Mammary epithelial cell (primary cell): ENCODE measurements at regions of chr19 and their contacts with region 1.

Region 1: DNA sequence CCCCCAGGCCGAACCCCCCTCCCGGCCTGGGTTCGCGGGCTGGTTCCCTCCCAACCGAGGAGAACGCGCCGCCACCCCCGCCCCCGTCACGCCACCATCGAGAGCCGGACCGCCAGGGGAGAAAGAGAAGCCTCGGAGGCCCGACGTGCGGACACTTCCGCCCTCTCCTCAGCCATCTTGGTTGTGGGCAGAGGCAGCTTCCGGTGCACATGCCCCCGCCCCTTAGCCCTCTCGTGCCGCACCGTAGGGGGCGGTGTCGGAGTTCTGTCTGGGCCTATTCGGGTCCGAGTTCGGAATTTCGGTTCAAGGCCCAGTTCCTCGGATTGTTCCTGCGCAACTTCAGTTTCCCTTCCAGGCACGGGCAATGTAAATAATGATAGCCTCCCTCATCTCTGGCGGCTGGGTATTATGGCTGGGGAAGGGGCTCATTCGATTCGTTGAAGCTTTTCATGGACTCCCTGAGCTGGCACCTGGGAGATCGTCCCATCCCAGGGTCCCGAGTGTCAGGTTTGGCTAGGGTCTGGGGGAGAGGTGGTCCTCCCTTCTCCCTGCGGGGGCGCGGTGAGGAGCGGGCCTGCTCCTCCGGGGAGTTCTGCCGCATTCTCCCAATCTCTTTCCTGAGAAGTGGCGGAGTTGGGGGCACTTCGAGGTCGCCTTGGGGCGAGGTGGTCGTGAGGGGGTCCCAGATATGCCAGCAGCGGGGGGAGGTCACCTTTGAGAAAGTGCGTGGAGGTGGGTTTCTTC is at the starts of genes IER2 and STX10:
- DNase-seq: peak; percentile 93
- H3K4me3 ChIP-seq: peak within 1 kb of the TSS; percentile 61 to 93 (median 74)
- H3K27ac ChIP-seq: peak within 1 kb of the TSS; percentile 93
- H3K4me1 ChIP-seq: peaks cover 16% of the 10 kb centered on the region
- H3K27me3 ChIP-seq: no peaks in the 10 kb centered on the region
- CTCF ChIP-seq: peak; percentile 27 to 70
- total RNA-seq, gene IER2: 16.2 to 108 TPM
- total RNA-seq, gene STX10: 33.7 to 48.0 TPM

Region 2: DNA sequence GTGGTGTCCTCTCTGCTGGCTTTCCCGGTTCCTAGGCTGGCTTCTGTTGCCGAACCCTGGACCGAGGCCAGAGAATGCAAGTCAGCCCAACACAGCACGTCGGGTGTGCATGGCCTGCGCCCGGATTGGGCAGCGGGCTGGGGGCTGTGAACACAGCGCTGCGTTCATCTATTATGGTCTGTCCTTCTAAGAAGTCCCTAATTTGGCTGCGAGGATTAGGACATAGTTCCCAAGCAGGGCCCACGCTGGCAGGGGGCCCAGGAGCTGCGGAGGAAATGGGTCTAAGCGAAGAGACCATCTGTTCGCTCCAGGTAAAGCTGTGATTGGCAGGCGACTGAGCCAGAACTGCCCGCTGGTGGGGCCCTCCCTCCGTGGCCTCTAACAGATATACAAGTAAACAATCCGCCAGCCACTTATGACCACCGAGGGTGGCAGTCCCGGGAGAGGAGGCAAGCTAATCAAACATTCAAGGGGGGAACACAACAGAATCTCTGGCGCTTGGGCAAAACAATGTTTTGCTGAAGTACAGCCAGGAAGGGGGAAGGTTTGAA is 237.3 kb before region 1 on chr19:
- CTCF ChIA-PET with region 1: no interaction called
- dilution Hi-C with region 1: no loop called
- in situ Hi-C with region 1: no loop called
- intact Hi-C with region 1: no loop called
- DNase-seq: no peak
- H3K4me3 ChIP-seq: no peak overlapping the region
- H3K27ac ChIP-seq: no peak overlapping the region
- H3K4me1 ChIP-seq: peaks cover 14% of the 10 kb centered on the region
- H3K27me3 ChIP-seq: no peaks in the 10 kb centered on the region
- CTCF ChIP-seq: no peak

Region 3: GRCh38 chr19:12974301-12975220 is 175.8 kb before region 1 on chr19:
- CTCF ChIA-PET with region 1: no interaction called
- dilution Hi-C with region 1: no loop called
- in situ Hi-C with region 1: no loop called
- intact Hi-C with region 1: loop called (anchors 5 kb)
- DNase-seq: no peak
- H3K4me3 ChIP-seq: no peak overlapping the region
- H3K27ac ChIP-seq: no peak overlapping the region
- H3K4me1 ChIP-seq: no peaks in the 10 kb centered on the region
- H3K27me3 ChIP-seq: peaks cover 3% of the 10 kb centered on the region
- CTCF ChIP-seq: no peak

Region 4: GRCh38 chr19:13060964-13061927 is 89.1 kb before region 1 on chr19:
- CTCF ChIA-PET with region 1: no interaction called
- dilution Hi-C with region 1: loop called (anchors 5 kb)
- in situ Hi-C with region 1: no loop called
- intact Hi-C with region 1: no loop called
- DNase-seq: peak; percentile 67
- H3K4me3 ChIP-seq: peak overlapping the region; percentile 20 to 23 (median 23)
- H3K27ac ChIP-seq: peak overlapping the region; percentile 77
- H3K4me1 ChIP-seq: peaks cover 35% of the 10 kb centered on the region
- H3K27me3 ChIP-seq: no peaks in the 10 kb centered on the region
- CTCF ChIP-seq: peak; percentile 84 to 97

Region 5: DNA sequence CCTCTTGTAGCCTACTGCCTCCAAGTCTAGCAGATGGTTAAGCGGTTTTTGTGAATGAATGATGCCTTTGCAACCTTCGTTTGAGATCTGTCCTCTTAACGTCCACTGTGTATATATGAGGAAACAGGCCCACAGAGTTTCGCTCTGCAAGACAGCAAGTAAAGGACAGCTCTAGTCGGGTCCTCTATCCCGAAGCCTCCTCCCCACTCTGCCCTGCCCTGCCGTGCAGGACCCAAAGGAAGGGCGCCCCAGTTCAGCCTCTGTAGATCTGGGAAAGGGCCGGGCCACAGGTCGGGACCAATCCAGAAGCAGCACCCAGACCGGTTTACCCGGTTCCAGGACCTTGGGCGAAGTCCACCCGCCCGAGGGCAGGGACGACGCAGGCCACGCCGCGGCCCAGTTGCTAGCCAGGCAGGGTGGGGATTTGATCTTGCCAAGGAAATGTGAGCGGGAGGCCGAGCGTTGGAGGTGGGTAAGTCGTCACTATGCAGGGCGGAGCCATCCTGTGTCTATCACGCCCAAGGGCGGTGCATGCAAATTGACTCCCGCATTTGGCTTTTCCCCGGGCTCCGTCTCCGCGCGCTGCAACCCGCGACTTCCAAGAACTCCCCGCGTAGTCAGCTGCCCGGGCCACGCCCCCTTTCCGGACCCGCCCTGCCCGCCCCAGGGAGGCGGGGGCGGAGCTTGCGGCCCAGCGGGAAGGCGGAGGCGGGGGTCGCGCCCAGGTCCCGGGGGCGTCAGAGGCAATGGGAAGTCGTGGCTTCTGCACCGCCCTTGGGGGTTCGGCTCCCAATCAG is 12.4 kb after region 1 on chr19:
- CTCF ChIA-PET with region 1: no interaction called
- dilution Hi-C with region 1: no loop called
- in situ Hi-C with region 1: no loop called
- intact Hi-C with region 1: loop called (anchors 1 kb)
- DNase-seq: peak; percentile 97
- H3K4me3 ChIP-seq: peak overlapping the region; percentile 3 to 36 (median 33)
- H3K27ac ChIP-seq: peak overlapping the region; percentile 82
- H3K4me1 ChIP-seq: peaks cover 51% of the 10 kb centered on the region
- H3K27me3 ChIP-seq: no peaks in the 10 kb centered on the region
- CTCF ChIP-seq: no peak

Region 6: DNA sequence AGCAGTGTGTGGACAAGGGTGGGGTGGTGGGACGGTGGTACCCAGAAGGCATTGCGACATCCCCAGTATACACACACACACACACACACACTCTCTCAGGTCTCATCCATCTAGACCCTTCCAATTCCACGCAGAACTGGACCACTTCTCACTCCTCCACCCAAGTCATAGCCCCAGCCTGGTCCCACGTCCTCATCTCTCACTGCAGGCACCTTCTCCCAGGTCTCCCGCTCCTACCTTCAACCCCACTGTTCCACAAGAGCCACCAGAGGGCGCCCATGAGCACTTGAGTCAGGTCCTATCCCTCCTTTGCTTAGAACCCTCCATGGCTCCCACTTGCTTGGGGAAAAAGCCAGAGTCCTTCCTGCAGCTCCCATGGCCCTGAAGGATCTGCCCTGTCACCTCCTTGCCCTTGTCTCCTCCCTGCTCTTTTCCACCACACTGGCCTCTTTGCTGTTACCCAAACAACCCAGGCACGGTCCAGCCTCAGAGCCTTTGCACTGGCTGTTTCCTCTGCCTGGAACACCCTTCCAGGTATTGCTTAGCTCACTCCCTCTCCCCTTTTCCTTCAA is 62.5 kb after region 1 on chr19:
- CTCF ChIA-PET with region 1: no interaction called
- dilution Hi-C with region 1: no loop called
- in situ Hi-C with region 1: no loop called
- intact Hi-C with region 1: loop called (anchors 5 kb)
- DNase-seq: peak; percentile 33
- H3K4me3 ChIP-seq: no peak overlapping the region
- H3K27ac ChIP-seq: no peak overlapping the region
- H3K4me1 ChIP-seq: no peaks in the 10 kb centered on the region
- H3K27me3 ChIP-seq: no peaks in the 10 kb centered on the region
- CTCF ChIP-seq: peak; percentile 59 to 62

Region 7: DNA sequence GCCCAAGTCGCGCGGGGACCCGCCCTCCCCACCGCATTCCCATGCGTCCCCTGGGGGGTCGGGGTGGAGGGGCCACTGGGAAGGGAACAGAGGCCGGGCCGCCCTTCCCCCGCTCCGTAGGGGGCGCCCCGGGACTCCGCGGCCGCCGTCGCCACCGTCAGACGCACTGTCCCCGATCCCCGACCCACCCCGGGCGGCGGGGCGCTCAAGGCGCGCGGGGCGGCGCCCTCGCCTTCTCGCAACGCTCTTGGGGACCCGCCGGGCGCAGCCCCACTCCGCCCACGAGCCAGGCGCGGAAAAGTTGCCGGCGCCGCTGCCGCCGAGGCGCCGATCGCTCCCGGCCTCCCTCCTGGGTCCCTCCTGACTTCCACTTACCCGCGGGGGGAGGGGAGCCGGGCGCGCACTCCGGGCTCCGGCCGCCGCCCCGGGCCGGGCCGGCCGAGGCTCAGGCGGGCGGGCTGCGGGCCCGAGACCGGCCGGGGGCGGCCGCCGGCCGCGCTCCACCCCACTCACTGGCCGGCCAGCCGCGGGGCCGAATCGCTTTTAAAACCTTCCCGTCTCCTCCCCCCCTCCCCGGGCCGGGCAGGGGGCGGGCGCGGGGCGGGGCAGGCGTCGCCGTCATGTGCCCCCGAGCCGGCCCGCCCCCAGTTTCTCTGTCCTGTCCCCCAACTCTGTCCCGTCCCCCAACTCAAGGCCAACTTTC is 692.2 kb after region 1 on chr19:
- CTCF ChIA-PET with region 1: no interaction called
- dilution Hi-C with region 1: no loop called
- in situ Hi-C with region 1: no loop called
- intact Hi-C with region 1: loop called (anchors 5 kb)
- DNase-seq: peak; percentile 83
- H3K4me3 ChIP-seq: peak overlapping the region; percentile 73 to 91 (median 86)
- H3K27ac ChIP-seq: peak overlapping the region; percentile 98
- H3K4me1 ChIP-seq: peaks cover 40% of the 10 kb centered on the region
- H3K27me3 ChIP-seq: no peaks in the 10 kb centered on the region
- CTCF ChIP-seq: no peak